Heart right ventricle (tissue), 16 donors: ENCODE measurements at regions of chr15 and their contacts with region 1.

Region 1: DNA sequence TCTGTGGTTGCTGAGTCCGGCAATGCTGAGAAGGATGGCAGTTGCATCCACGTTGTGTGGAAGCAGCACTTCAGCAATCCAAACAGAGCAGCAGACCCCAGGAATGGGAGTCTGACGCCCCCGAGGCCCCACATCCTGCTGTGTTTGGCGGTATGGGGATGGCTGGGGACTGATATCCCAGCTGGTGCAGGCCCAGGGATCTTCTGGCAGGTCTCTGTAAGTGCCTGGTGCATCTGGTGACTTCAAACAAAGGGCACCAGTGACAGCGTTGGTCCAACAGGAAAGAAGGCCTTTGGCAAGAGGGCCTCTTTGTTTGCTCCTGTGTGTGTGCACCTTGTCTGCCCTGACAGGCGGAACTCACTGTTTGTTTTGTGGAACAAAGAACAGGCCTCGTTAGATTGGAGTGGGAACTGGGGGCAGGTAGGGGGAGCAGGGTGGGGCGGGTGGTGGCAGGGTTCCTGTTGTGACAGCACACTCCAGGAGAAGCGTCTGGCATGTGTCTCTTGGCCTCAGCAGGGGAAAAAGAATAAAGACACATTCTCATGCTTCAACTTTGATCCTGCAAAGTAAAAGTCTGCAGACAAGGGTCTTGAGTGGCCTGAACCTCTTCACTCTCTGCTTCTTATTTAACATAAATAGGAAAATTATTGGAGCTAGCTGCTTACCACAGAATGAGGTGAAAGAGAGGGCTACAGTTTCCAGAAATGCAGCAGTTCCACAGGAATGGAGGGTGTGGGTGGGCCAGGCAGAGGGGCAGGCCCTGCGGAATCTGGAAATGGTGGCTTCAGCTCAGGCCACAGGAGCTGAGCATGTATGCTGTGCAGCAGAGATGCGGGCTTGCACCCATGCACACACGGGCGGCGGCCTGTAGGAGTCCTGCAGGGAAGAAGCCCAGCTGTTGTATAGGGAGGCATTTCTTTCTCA is 94.5 kb upstream of the MYZAP start:
- DNase-seq: peak in 1 of 2 donors; percentile 43
- ATAC-seq: peak; percentile 52 to 91 (median 76)
- H3K4me3 ChIP-seq: no peak overlapping the region
- H3K27ac ChIP-seq: peak overlapping the region in 7 of 10 donors; percentile 47 to 75 (median 62)
- H3K4me1 ChIP-seq: peaks cover 20 to 66% (median 35%) of the 10 kb centered on the region in 9 donors
- H3K27me3 ChIP-seq: no peaks in the 10 kb centered on the region
- CTCF ChIP-seq: no peak

Region 2: DNA sequence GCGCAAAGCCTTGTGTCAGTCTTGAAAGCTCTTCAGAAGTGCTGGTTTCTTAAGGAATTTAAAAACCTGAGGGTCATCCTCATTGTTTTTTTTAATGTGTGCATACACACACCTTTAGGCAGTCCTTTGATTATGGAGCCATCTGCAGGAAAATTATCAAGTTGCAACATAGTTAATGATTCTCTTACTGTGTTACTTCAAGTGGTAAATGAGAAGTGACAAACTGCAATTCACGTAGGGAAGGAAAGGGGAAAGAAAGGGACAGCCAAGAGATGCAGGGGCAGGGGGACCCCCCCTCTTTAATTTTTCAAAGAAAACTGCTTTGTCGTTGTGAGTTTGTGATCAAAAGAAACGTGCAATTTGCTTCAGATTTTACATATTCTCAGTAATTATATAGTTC is 283.3 kb before region 1 on chr15:
- intact Hi-C with region 1: no loop called
- DNase-seq: peak in 1 of 2 donors; percentile 9
- ATAC-seq: peak; percentile 47 to 82 (median 76)
- H3K4me3 ChIP-seq: no peak overlapping the region
- H3K27ac ChIP-seq: no peak overlapping the region
- H3K4me1 ChIP-seq: peaks cover 3 to 56% (median 25%) of the 10 kb centered on the region in 9 donors
- H3K27me3 ChIP-seq: no peaks in the 10 kb centered on the region
- CTCF ChIP-seq: peak; percentile 39 to 79 (median 62)

Region 3: GRCh38 chr15:57320631-57321220 is 176.5 kb before region 1 on chr15:
- intact Hi-C with region 1: no loop called
- DNase-seq: peak in 1 of 2 donors; percentile 57
- ATAC-seq: peak; percentile 39 to 84 (median 76)
- H3K4me3 ChIP-seq: no peak overlapping the region
- H3K27ac ChIP-seq: peak overlapping the region in 8 of 10 donors; percentile 11 to 80 (median 70)
- H3K4me1 ChIP-seq: peaks cover 0 to 16% (median 9%) of the 10 kb centered on the region in 9 donors
- H3K27me3 ChIP-seq: no peaks in the 10 kb centered on the region
- CTCF ChIP-seq: no peak

Region 4: DNA sequence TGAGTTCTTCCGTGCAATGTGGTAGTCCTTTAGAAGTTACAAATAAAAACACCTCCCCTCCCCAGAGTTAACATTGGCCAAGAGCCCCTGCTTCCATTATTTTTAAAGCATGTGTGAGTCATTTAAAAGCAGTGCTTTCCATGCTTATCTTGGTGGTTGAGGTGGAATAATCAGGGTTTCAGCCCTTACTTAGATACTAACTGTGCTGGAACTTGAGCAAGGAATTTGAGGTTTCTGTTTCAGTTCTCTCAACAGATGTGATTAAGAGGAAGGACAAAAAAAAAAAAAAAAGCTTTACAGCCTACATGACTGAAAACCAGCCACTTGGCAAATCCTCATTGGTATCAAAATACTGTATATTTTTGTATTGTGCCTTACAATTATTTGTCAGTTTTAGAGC is 56.4 kb before region 1 on chr15:
- intact Hi-C with region 1: loop called in 1 of 10 experiments (anchors 10 kb)
- DNase-seq: no peak
- ATAC-seq: peak in 5 of 8 donors; percentile 18 to 59 (median 52)
- H3K4me3 ChIP-seq: no peak overlapping the region
- H3K27ac ChIP-seq: peak overlapping the region in 5 of 10 donors; percentile 13 to 37 (median 27)
- H3K4me1 ChIP-seq: peaks cover 0 to 37% (median 24%) of the 10 kb centered on the region in 9 donors
- H3K27me3 ChIP-seq: no peaks in the 10 kb centered on the region
- CTCF ChIP-seq: no peak

Region 5: DNA sequence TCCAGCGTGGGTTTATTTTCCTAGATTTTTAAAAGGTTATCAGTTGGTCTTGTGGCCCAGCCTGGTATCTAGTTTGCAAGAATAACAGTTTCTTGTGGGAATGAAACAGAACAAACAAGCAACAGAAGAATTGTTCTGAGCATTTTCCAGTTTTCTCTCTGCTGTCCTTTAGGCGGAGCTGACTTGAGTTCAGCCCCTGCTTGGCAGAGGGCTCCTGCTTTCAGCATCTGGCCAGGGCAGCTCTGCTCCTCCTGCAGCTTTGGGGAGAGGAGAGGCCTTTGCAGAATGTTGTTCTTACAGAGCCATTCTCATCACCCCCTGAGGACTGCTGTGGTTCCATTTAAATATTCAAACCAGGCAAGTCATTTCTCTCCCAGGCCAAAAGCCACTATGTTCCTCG is 450.6 kb after region 1 on chr15:
- intact Hi-C with region 1: no loop called
- DNase-seq: peak; percentile 32 to 36
- ATAC-seq: peak in 7 of 8 donors; percentile 55 to 92 (median 77)
- H3K4me3 ChIP-seq: no peak overlapping the region
- H3K27ac ChIP-seq: no peak overlapping the region
- H3K4me1 ChIP-seq: peaks cover 0 to 8% (median 0%) of the 10 kb centered on the region in 9 donors
- H3K27me3 ChIP-seq: peaks cover 0 to 3% (median 0%) of the 10 kb centered on the region in 7 donors
- CTCF ChIP-seq: no peak